Heart right ventricle (tissue), 16 donors: ENCODE measurements at regions of chr17 and their contacts with region 1.

Region 1: DNA sequence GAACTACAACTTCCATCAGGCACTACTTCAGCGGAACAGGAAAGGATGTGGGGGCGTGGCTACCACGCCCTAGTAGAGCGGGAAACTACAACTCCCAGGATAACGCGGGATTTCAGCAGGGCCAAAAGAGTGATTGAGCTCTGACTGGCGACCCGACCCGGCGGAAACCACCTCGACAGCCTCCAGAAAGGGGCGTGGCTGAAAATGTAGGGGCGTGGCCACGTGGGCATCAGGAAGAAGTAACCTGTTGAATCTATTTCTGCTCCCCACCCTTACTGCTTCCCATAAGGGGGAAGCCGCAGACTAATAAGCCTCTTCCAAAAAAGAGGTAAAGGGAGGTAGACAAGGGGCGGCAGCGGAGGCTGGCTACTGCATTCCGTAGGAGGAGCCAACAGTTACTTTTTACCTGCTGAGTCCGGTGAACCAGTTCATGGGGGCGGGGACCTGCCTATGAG is at the start of gene TMEM102:
- DNase-seq: peak; percentile 93 to 96
- ATAC-seq: peak; percentile 76 to 92 (median 88)
- H3K4me3 ChIP-seq: peak within 1 kb of the TSS; percentile 16 to 66 (median 51)
- H3K27ac ChIP-seq: peak within 1 kb of the TSS in 9 of 10 donors; percentile 14 to 78 (median 57)
- H3K4me1 ChIP-seq: peaks cover 24 to 56% (median 46%) of the 10 kb centered on the region in 9 donors
- H3K27me3 ChIP-seq: peaks cover 0 to 23% (median 6%) of the 10 kb centered on the region in 7 donors
- CTCF ChIP-seq: no peak
- total RNA-seq, gene TMEM102: 1.2 to 3.5 (median 2.2) TPM

Region 2: GRCh38 chr17:7403977-7404736 is 31.1 kb before region 1 on chr17 and contains the start of gene TMEM256:
- intact Hi-C with region 1: loop called in 2 of 10 experiments (anchors 5 kb)
- DNase-seq: peak; percentile 97 to 99
- ATAC-seq: peak; percentile 91 to 97 (median 96)
- H3K4me3 ChIP-seq: peak within 1 kb of the TSS; percentile 54 to 87 (median 68)
- H3K27ac ChIP-seq: peak within 1 kb of the TSS; percentile 80 to 96 (median 88)
- H3K4me1 ChIP-seq: peaks cover 13 to 28% (median 19%) of the 10 kb centered on the region in 9 donors
- H3K27me3 ChIP-seq: peaks cover 0 to 17% (median 0%) of the 10 kb centered on the region in 7 donors
- CTCF ChIP-seq: peak in 2 of 9 donors; percentile 8 to 13
- total RNA-seq, gene TMEM256: 61.8 to 83.2 (median 74.2) TPM

Region 3: DNA sequence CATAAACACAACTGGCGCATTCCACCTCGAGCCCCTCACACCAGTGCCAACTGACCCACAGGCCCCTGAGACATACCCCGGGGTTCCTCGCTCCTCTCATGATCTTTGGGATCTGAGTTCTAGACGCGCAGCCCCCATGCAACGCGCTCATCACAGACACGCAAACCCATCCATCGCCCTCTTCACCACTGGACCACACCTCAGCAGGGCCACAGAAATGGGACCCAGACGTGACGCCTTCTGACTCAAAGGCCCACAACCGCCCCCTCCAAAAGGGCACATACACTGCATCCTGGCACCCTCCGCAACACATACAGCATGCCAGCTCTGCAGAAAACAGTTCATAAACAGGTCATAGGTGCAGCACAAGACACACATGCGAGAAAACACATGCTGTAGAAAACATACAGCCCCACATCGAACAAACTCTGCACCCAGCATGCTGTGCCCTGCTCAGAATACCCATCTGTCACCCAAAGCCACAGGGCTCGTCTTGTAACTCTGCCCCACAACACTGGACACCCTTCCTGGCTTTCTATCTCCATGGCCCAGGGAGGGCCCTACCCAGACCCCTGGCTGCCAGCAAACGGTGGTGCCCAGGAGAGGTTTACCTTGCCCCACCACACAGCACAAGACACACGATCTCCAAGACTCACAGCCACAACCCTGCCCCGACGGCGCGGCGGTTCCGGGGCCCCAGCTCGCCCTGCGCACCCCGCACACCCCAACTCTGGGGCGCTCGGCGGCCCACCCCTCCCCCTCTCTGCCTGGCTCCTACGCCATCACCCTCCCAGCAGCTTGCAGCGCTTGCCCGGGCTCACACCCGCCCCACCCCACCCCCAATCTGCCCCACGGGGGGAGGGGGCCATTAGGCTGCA is 43.3 kb after region 1 on chr17:
- intact Hi-C with region 1: loop called in 7 of 10 experiments (anchors 2 to 5 kb)
- DNase-seq: peak; percentile 57 to 68
- ATAC-seq: peak; percentile 10 to 38 (median 18)
- H3K4me3 ChIP-seq: peak overlapping the region; percentile 67 to 100 (median 97)
- H3K27ac ChIP-seq: peak overlapping the region; percentile 99 to 100 (median 100)
- H3K4me1 ChIP-seq: peaks cover 28 to 83% (median 63%) of the 10 kb centered on the region in 9 donors
- H3K27me3 ChIP-seq: no peaks in the 10 kb centered on the region
- CTCF ChIP-seq: no peak

Region 4: GRCh38 chr17:7561028-7561575 is 125.9 kb after region 1 on chr17:
- intact Hi-C with region 1: loop called in 7 of 10 experiments (anchors 2 to 10 kb)
- DNase-seq: peak; percentile 91 to 92
- ATAC-seq: peak; percentile 66 to 86 (median 78)
- H3K4me3 ChIP-seq: peak overlapping the region; percentile 84 to 100 (median 96)
- H3K27ac ChIP-seq: peak overlapping the region; percentile 83 to 99 (median 94)
- H3K4me1 ChIP-seq: peaks cover 41 to 73% (median 69%) of the 10 kb centered on the region in 9 donors
- H3K27me3 ChIP-seq: no peaks in the 10 kb centered on the region
- CTCF ChIP-seq: peak; percentile 80 to 93 (median 87)

Region 5: DNA sequence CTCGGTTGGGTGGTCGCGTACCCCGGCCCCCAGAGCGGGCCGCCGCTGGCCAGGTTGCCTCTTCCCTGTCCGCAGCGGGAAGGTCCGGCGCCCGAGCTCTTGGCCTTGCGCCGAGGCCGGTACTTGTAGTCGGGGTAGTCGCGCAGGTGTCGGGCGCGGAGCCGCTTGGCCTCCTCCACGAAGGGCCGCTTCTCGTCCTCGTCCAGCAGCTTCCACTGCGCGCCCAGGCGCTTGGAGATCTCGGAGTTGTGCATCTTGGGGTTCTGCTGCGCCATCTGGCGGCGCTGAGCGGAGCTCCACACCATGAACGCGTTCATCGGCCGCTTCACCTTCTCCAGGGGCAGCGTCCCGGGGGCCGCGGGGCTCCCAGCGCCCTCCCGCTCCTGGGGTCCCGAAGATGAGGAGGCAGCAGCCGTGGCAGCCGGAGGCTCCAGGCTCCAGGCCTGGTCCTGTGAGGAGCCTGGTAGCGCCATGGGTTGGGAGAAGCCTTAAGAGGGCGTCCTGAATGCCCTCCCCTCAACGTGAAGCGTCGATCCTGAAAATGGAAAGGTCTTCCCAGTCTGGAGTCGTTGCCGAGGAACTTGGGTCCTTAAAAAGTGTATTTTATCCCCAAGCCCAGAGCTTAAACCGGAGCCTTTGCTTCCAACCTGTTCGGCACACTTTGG is 154.1 kb after region 1 on chr17:
- intact Hi-C with region 1: loop called in 2 of 10 experiments (anchors 5 to 10 kb)
- DNase-seq: peak; percentile 80 to 85
- ATAC-seq: peak; percentile 79 to 88 (median 84)
- H3K4me3 ChIP-seq: peak overlapping the region in 9 of 10 donors; percentile 27 to 58 (median 49)
- H3K27ac ChIP-seq: peak overlapping the region in 9 of 10 donors; percentile 8 to 68 (median 57)
- H3K4me1 ChIP-seq: peaks cover 8 to 47% (median 33%) of the 10 kb centered on the region in 9 donors
- H3K27me3 ChIP-seq: no peaks in the 10 kb centered on the region
- CTCF ChIP-seq: peak; percentile 63 to 96 (median 91)